ENCODE measurements at regions of chr16 and their contacts with region 1.

Region 1: DNA sequence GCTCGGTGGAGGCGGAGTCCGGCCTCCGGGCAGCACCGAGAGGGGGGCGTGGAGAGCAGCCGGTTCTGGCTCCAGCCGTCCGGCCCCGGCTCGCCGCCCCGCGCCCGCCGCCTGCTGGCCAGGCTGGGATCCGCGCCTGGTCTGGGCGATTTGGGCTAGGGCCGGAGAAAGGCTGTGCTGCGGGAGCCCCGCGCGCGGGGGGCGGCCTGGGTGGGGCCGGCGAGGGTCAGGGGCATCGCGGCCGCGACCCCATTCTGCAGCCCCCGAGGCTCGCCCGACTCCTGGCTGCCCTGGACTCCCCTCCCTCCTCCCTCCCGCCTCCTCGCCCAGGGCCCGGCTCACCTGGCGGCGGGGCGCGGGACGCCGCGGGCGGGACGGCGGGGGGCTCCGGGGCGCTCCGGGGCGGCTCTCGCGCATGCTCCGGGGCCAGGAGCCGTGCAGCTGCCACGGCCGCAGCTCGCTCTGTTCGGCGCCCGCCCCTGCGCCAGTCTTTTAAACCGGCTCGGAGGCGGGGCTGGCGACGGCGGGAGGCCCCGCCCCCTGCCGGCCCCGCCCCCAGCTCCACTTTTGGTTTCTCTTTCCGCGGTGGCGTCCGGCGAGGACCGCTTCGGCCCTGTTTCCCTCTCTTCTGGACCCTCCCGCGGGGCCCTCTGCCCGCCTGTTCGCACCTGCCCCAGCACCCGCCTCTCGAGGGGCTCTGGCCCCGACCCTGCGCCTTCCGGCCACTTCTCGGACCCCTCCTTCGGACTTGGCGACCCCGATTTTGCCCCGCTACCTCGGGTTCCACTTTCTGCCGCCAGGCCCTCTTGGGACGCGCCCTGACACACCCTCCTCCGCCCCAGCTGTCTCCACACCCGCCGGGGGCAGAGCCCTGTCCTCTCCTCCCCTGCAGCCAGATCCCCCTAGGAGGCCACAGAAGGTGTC is at the start of gene SOCS1:
- DNase-seq: peak; percentile 97
- H3K4me3 Mint-ChIP-seq: peak within 1 kb of the TSS; percentile 99
- H3K27ac Mint-ChIP-seq: peak within 1 kb of the TSS; percentile 97
- H3K4me1 Mint-ChIP-seq: peaks cover 50% of the 10 kb centered on the region
- H3K27me3 Mint-ChIP-seq: no peaks in the 10 kb centered on the region
- total RNA-seq, gene SOCS1: 152 and 153 TPM in 2 replicates

Region 2: GRCh38 chr16:10964039-10964890 is 291.7 kb before region 1 on chr16:
- intact Hi-C with region 1: loop called (anchors 1 kb)
- DNase-seq: peak; percentile 95
- H3K4me3 Mint-ChIP-seq: peak overlapping the region; percentile 74
- H3K27ac Mint-ChIP-seq: peak overlapping the region; percentile 97
- H3K4me1 Mint-ChIP-seq: peaks cover 53% of the 10 kb centered on the region
- H3K27me3 Mint-ChIP-seq: no peaks in the 10 kb centered on the region

Region 3: DNA sequence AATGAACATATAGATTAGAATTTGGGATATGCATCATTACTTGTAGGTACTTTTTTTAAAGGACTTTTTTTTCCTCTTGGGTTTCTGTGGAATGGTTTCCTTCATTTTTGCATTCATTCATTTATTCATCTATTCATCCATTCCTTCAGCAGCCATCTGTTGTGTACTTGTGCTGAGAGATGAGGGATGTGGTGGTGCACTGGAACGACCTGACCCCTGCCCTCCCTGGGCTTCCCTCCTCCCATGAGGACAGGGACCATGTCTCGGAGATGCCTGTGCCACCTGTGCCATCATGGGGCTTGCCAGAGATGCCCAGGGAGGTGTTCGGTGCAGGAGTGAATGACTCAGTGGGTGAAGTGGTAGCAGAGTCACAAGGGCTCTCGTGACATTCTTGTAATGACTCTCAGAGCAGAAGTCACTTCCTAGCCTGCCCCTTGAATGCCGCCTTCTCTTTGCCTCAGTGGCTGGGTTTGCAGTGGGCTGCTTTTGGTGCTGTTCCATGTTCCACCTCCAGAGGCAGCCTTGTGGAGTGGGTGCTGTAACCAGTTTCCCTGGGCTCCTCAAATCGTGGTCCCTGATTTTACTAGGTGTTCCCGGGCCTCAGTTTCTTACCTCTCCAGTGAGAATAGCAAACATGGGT is 267.7 kb before region 1 on chr16:
- intact Hi-C with region 1: loop called (anchors 1 kb)
- DNase-seq: peak; percentile 89
- H3K4me3 Mint-ChIP-seq: peak overlapping the region; percentile 66
- H3K27ac Mint-ChIP-seq: peak overlapping the region; percentile 92
- H3K4me1 Mint-ChIP-seq: peaks cover 79% of the 10 kb centered on the region
- H3K27me3 Mint-ChIP-seq: no peaks in the 10 kb centered on the region

Region 4: DNA sequence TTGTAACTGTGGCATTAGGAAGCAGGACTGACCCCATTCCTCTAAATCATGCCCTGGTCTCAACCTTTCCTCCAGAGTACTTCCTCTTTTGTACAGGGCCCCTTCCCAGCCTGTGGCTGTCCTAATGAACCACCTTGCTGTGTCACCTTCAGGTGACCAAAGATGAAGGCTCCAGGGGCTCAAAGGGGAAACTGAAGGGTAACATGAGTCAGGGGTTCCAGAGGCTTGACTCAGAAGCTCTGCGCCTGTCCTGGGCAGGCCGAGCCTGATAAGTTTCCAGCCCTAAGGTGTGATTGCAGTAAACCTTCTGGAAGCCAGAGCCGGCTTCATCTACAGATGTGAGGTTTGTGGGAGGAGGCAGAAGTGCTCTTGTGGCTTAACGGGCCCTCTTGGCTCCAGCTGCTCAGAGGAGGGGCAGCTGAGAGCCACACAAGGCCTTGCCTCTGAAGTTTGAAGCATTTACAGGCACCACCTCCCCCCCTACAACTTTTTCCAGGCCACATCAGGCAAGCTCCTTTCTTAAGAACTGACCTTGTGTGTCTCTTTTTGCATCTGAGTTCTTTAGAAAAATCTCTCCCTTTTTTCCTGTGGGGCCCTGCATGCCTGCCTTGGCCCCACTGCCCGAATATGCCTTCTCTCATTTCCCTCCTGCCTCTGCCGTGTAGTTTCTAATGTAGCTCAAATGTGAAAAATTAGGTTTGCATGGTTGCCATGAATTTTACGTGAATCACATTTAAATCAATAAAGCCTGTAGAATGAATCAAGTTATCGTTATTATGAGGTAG is 161.7 kb before region 1 on chr16:
- intact Hi-C with region 1: loop called (anchors 1 kb)
- DNase-seq: peak; percentile 89
- H3K4me3 Mint-ChIP-seq: peak overlapping the region; percentile 71
- H3K27ac Mint-ChIP-seq: peak overlapping the region; percentile 98
- H3K4me1 Mint-ChIP-seq: peaks cover 66% of the 10 kb centered on the region
- H3K27me3 Mint-ChIP-seq: no peaks in the 10 kb centered on the region

Region 5: DNA sequence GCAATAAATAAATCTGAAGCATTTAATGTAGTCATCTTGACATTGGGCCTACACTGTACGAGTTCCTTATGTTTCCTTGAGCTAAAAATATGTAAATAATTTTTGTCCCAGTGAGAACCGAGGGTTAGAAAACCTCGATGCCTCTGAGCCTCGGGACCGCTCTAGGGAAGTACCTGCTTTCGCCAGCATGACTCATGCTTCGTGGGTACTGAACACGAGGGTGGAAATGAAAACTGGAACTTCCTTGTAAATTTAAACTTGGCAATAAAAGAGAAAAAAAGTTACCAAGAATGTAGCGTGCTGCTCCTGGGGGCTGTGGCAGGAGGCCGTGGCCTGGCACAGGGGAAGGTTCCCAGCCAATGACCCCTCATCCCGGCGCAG is 74.1 kb before region 1 on chr16:
- intact Hi-C with region 1: loop called (anchors 5 kb)
- DNase-seq: peak; percentile 73
- H3K4me3 Mint-ChIP-seq: peak overlapping the region; percentile 57
- H3K27ac Mint-ChIP-seq: peak overlapping the region; percentile 81
- H3K4me1 Mint-ChIP-seq: peaks cover 38% of the 10 kb centered on the region
- H3K27me3 Mint-ChIP-seq: no peaks in the 10 kb centered on the region

Region 6: DNA sequence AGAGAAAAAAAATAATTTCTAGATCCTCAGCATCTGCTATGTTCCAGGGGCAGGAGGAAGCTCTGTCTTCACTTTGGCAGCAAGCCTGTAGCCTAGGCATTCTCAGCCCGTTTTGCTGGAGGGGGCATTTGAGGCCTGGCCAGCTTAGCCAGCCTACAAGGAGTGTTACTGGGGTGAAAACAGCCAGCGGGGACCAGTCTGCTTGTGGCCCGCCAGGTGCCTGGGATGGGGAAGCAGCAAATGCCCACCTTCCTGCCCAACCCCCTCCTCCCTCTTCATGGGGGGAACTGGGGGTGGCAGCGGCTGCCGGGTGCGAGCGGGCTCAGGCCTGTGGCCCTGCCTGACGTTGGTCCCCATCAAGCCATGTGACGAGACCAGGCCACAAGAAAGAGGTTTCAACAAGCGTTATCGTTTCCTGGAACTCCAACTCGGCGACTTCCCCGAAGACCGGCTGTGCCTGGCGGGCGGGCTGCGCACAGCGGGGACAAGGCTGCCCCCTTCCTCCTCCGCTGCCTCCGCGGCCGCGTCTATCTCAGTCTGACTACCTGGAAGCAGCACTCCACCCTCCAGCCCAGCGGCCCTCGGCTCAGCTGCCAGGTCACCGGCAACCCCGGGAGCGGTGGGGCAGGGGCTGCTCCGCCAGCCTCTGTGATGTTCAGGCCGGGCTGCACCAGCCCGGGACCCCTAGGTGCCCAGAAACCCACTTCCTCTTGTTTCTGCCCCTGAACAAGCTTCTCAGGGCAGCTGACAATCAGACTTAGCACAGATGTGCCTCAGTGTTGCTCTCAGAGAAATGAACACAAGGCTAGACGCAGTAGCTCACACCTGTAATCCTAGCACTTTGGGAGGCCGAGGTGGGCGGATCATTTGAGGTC is 22.9 kb before region 1 on chr16:
- intact Hi-C with region 1: loop called (anchors 1 kb)
- DNase-seq: peak; percentile 98
- H3K4me3 Mint-ChIP-seq: peak overlapping the region; percentile 78
- H3K27ac Mint-ChIP-seq: peak overlapping the region; percentile 98
- H3K4me1 Mint-ChIP-seq: peaks cover 74% of the 10 kb centered on the region
- H3K27me3 Mint-ChIP-seq: no peaks in the 10 kb centered on the region

Region 7: DNA sequence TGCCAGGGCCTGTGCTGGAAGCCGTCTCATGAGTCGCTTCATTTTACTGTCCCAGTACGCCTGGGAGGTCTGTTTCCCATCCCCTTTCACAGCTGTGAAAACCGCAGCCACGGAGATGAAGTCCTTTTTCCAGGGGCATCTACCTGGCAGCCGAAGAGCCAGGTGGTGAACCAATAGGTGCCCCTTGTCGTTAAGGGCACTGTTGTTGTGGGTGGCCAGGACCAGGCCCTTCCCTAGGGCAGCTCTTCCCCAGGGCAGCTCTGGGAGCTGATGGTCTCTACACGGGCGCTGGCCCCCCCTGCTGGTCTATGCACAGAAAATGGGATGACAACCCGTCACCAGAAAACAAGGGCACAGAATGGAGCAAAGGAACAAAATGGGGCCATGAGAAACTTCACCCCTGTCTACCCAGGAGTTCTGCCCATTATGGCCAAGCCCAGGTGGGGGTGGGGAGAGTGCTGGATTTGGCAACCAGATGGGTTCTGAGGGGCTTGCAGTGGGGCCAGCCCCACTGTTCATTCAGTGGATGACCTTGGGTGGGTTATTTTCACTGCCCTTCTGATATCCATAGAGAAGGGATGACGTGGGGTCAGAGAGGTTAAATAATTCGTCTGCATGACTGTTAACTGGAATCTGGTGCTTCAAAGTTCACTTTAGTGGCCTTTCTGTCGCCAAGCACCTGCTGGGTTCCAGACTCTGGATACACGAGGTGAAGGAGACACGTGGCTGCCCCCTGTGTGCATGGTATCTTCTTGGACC is 100.8 kb after region 1 on chr16:
- intact Hi-C with region 1: loop called (anchors 2 kb)
- DNase-seq: peak; percentile 85
- H3K4me3 Mint-ChIP-seq: peak overlapping the region; percentile 37
- H3K27ac Mint-ChIP-seq: peak overlapping the region; percentile 20
- H3K4me1 Mint-ChIP-seq: peaks cover 63% of the 10 kb centered on the region
- H3K27me3 Mint-ChIP-seq: peaks cover 13% of the 10 kb centered on the region

Measured in activated CD4-positive, alpha-beta T cell treated with anti-CD3 and anti-CD28 coated beads, Interleukin-2, amount 10 ng/mL, durations not matched to agents 24 days and 14 days (primary cell).